ENCODE measurements at regions of chr11 and their contacts with region 1.

Region 1: DNA sequence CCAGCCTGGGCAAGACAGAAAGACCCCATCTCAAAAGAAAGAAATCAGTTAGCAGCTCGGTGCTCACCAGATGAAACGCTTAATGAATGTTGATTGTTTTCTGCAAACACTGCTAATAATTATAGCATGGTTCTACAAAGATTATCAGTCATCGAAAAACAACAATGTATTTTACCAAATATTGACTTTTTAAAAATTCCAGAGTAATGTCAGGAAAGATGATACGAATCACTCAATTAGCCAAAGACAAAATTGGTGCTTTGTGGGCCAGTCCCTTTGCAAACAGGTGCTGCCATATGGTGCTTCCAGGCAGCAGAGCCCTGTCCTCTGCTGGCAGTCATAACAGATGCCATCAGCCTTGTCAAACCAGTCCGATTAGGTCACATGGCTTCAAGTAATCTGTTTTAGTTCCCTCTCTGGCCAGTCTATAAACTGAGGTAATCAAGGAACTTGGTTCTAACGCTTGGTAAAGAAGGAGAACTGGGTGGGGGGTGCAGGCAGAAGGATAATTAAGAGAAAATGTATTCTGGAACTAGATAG is 49.2 kb upstream of the CAPRIN1 start:
- DNase-seq: no peak
- ATAC-seq: no peak

Region 2: DNA sequence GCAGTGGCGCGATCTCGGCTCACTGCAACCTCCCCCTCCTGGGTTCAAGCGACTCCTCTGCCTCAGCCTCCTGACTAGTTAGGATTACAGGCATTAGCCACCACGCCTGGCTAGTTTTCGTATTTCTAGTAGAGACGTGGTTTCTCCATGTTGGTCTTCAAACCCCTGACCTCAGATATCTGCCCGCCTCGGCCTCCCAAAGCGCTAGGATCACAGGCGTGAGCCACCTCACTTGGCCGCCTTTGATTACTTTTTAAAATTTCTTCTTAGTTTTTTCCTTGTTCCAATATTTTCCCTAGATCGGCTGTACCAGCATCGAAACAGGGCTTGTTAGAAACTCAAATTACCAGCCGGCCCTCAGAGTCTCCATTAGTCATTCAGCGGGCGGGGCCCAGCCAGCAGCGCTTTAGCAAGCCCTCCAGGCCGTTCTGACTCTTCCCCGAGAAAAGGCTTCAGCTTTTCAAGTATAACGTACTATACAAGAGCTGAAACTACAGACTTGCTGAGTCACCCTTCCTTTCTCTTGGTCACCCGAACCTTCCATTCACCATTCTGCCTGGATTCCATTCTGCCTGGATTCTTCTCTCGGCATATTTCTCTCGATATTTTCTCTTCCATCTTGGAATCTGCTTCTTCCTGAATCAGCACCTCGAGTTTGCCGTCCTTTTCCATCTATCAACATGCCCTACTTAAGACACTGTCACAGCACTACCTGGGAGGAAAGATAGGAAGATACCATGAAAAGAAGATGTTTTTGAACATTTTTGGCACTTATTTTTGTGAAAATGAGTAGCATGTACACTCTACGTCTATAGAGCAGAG is 42.5 kb after region 1 on chr11:
- intact Hi-C with region 1: loop called in 1 of 2 experiments (anchors 5 kb)
- DNase-seq: peak; percentile 32
- ATAC-seq: peak in 1 of 2 donors; percentile 59